ENCODE measurements at regions of chr12 and their contacts with region 1.

Region 1: DNA sequence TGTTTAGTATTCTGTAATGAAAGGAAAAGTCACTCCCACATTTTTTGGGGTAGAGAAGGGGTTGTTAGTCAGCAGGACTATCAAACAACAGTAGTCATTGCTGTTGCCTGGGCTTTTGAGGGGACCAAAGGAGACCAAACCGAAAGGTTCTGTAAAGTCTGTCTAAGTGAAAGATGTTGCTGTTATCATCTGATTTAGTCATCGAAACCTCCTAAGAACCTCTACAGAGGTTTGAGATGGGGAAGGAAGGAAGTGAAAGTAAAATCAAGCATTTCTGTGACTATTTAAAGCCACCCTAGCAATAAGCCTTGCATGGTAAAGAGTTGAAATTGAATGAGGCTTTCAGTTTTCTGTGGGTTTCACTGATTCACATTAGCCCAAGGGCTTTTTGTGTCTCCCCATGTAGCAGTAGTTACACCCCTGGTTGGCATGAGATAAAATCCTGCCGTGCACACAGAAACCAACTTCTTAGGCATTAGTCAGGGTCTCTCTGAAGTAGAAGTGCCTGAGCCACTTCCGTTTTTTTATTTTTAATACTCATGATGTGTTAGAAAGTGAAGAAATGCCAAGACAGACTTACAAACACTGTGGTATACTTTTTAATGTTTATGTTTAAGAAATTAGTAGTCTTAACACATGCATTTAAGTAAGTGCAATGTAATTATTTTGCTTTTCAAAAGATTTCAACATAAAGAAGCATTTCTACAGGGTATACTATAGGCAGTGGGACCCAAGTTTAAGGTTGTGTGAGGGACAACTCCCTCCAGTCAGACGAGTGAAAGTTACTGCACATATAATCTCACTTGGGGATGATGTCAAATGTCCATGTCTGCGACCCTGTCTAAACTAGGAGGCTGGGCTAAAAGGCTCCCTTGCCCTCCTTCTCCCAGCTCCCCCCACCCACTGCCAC is 50.4 kb downstream of the DYRK2 start:
- DNase-seq: peak; percentile 34
- H3K4me3 Mint-ChIP-seq: peak overlapping the region; percentile 42
- H3K27ac Mint-ChIP-seq: peak overlapping the region; percentile 67
- H3K4me1 Mint-ChIP-seq: peaks cover 49% of the 10 kb centered on the region
- H3K27me3 Mint-ChIP-seq: peaks cover 53% of the 10 kb centered on the region

Region 2: GRCh38 chr12:67578976-67579661 is 119.8 kb before region 1 on chr12:
- intact Hi-C with region 1: loop called (anchors 2 kb)
- DNase-seq: peak; percentile 11
- H3K4me3 Mint-ChIP-seq: peak overlapping the region; percentile 30
- H3K27ac Mint-ChIP-seq: peak overlapping the region; percentile 56
- H3K4me1 Mint-ChIP-seq: peaks cover 30% of the 10 kb centered on the region
- H3K27me3 Mint-ChIP-seq: peaks cover 12% of the 10 kb centered on the region

Region 3: GRCh38 chr12:67681105-67681778 is 17.7 kb before region 1 on chr12:
- intact Hi-C with region 1: no loop called
- DNase-seq: no peak
- H3K4me3 Mint-ChIP-seq: no peak overlapping the region
- H3K27ac Mint-ChIP-seq: no peak overlapping the region
- H3K4me1 Mint-ChIP-seq: peaks cover 10% of the 10 kb centered on the region
- H3K27me3 Mint-ChIP-seq: peaks cover 9% of the 10 kb centered on the region

Region 4: DNA sequence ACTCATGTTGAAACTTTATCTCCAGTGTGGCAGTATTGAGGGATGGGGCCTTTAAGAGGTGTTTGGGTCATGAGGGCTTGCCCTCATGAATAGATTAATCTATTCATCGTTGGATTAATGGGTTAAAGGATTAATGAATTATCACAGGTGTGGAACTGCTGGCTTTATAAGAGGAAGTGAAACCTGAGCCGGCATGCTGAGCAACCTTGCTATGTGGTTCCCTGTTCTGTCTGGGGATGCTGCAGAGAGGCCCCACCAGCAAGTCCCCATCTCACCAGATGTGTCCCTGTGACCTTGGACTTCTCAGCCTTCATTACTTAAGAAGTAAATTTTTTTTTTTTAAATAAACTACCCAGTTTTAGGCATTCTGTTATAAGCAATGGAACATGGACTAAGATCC is 59.2 kb after region 1 on chr12:
- intact Hi-C with region 1: loop called (anchors 2 kb)
- DNase-seq: no peak
- H3K4me3 Mint-ChIP-seq: no peak overlapping the region
- H3K27ac Mint-ChIP-seq: no peak overlapping the region
- H3K4me1 Mint-ChIP-seq: no peaks in the 10 kb centered on the region
- H3K27me3 Mint-ChIP-seq: no peaks in the 10 kb centered on the region

Region 5: GRCh38 chr12:67966560-67966959 is 267.6 kb after region 1 on chr12:
- intact Hi-C with region 1: no loop called
- DNase-seq: no peak
- H3K4me3 Mint-ChIP-seq: no peak overlapping the region
- H3K27ac Mint-ChIP-seq: no peak overlapping the region
- H3K4me1 Mint-ChIP-seq: no peaks in the 10 kb centered on the region
- H3K27me3 Mint-ChIP-seq: no peaks in the 10 kb centered on the region

Region 6: DNA sequence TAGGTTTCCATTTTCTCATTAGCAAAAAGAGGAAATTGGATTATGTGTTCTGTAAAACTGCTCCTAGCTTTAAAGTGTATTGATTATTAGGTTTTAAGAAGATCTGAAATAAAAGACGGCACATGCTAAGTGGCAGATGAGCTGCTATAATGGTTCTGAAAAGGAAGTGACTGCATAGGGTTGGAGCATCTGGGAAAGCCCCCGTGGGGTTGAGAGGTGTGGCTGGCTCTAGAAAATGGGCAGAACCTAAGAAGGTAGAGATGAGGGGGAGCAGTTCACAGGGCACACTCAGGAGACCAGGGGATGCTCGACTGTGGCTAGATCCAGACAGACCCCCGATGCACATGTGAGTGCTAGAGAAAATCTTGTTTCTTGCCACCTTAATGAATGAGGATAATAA is 292.2 kb after region 1 on chr12:
- intact Hi-C with region 1: loop called (anchors 2 kb)
- DNase-seq: peak; percentile 48
- H3K4me3 Mint-ChIP-seq: peak overlapping the region; percentile 78
- H3K27ac Mint-ChIP-seq: peak overlapping the region; percentile 91
- H3K4me1 Mint-ChIP-seq: peaks cover 77% of the 10 kb centered on the region
- H3K27me3 Mint-ChIP-seq: no peaks in the 10 kb centered on the region

Region 7: GRCh38 chr12:68163560-68164081 is 464.7 kb after region 1 on chr12:
- intact Hi-C with region 1: loop called (anchors 5 kb)
- DNase-seq: peak; percentile 34
- H3K4me3 Mint-ChIP-seq: peak overlapping the region; percentile 61
- H3K27ac Mint-ChIP-seq: peak overlapping the region; percentile 78
- H3K4me1 Mint-ChIP-seq: peaks cover 71% of the 10 kb centered on the region
- H3K27me3 Mint-ChIP-seq: no peaks in the 10 kb centered on the region

Region 8: DNA sequence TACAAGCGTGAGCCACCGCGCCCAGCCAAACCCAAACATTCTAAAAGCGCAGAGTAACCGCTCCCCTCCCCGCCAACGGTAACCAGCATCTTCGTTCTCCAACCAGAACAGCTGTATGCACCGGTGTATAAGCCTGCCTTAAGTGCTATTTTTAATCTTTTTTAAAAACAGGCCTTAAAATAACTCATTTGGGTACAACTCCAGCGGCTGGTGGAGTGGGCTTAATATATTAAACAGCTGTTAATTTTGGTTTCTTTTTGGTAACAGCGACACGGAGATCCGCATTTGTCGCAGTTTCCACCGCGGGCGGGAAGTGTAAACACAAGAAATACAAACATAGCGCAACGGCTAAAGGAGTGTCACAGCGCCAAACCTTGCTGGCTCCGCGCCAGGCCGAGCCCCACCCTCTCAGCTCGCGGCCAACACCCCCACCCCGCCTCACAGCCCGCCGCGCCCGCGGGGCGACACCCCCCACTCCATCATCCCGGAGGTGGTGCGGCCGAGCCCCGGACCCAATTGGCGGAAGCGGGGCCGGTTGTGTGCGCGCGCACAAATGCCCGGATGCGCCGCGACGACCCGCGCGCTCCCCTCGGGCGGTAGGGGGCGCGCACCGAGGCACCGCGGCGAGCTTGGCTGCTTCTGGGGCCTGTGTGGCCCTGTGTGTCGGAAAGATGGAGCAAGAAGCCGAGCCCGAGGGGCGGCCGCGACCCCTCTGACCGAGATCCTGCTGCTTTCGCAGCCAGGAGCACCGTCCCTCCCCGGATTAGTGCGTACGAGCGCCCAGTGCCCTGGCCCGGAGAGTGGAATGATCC is 1108.9 kb after region 1 on chr12 and contains the start of gene MDM2:
- intact Hi-C with region 1: loop called (anchors 5 kb)
- DNase-seq: peak; percentile 98
- H3K4me3 Mint-ChIP-seq: peak within 1 kb of the TSS; percentile 97
- H3K27ac Mint-ChIP-seq: peak within 1 kb of the TSS; percentile 99
- H3K4me1 Mint-ChIP-seq: peaks cover 34% of the 10 kb centered on the region
- H3K27me3 Mint-ChIP-seq: peaks cover 2% of the 10 kb centered on the region
- total RNA-seq, gene MDM2: 279 and 303 TPM in 2 replicates